Mammary epithelial cell (primary cell): ENCODE measurements at regions of chr2 and their contacts with region 1.

Region 1: DNA sequence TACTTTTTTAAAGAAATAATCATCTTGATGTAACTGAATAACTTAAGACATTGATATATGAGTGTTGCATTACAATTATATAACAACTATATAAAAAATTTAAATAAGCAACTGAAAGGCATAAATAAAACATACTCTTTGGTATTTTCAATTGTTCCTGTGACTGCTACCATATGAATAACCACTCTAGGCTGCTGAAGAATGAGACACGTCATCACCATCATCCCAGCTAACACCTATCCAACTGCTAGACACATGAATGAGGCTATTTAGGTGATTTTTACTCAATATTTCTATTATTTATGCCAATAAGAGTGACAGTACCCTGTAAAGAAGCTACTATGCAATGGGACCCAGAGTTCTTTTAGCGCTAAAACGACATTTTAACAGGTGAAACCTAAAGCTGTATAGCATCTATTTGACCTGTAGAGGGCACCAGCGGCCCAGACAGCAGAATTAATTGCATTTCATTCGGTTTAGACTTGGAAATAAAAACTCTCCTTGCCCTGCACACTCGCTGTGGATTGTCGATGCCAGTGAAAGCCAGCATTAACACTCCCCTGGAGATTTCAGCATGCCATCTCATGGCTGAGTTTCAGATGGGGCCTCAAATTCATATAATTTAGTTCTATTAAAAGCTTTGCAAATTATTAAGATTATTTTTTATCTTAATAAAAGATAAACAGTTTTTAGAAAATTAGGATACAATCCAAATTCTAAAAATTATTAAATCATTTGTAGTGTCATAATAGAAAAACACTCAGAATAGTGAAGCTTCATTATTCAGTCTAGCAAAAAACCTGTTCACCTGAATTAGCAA is 89.4 kb upstream of the MAP2 start:
- DNase-seq: peak; percentile 41
- H3K4me3 ChIP-seq: no peak overlapping the region
- H3K27ac ChIP-seq: no peak overlapping the region
- H3K4me1 ChIP-seq: peaks cover 4% of the 10 kb centered on the region
- H3K27me3 ChIP-seq: no peaks in the 10 kb centered on the region
- CTCF ChIP-seq: peak; percentile 87 to 96

Region 2: DNA sequence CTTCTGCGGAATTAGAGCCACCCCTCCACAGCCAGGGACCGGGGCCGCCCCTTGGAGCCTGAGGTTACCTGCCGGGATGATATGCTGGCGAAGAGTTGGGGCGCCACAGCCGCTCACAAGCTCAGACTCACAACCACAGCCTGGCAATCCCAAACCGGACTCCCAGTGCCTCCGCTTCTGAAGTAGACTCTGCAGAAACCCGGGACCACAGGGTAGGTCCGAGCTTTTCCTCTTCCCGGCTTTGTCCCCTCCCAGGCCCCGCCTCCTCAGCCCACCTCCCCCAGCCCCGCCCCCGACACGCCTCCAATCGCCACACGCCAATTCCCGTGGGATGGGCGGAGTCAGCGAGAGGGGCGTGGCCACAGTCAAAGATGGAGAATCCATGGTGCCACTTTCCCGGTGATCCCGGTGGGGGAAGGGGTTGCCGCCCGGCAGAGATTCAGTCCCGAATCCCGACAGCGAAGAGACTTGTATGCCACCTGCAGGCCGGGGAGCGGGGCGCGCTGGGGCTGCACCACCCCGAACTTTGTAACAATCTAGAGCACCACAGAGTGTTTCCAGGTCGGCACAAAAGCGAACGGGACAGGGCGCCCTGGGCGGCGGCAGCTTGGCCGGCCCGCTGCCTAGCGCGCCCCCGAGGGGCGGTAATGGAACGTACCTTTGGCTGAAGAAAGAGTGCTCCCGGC is 1079.4 kb before region 1 on chr2 and contains the start of gene IDH1:
- CTCF ChIA-PET with region 1: interaction called, 3 read pairs
- dilution Hi-C with region 1: no loop called
- in situ Hi-C with region 1: no loop called
- intact Hi-C with region 1: loop called (anchors 10 kb)
- DNase-seq: peak; percentile 95
- H3K4me3 ChIP-seq: peak within 1 kb of the TSS; percentile 73 to 97 (median 83)
- H3K27ac ChIP-seq: peak within 1 kb of the TSS; percentile 32
- H3K4me1 ChIP-seq: peaks cover 30% of the 10 kb centered on the region
- H3K27me3 ChIP-seq: no peaks in the 10 kb centered on the region
- CTCF ChIP-seq: peak; percentile 48 to 60
- total RNA-seq, gene IDH1: 113 to 125 TPM

Region 3: GRCh38 chr2:208466151-208466919 is 868.1 kb before region 1 on chr2:
- CTCF ChIA-PET with region 1: no interaction called
- dilution Hi-C with region 1: no loop called
- in situ Hi-C with region 1: no loop called
- intact Hi-C with region 1: loop called (anchors 1 kb)
- DNase-seq: peak; percentile 38
- H3K4me3 ChIP-seq: no peak overlapping the region
- H3K27ac ChIP-seq: no peak overlapping the region
- H3K4me1 ChIP-seq: no peaks in the 10 kb centered on the region
- H3K27me3 ChIP-seq: peaks cover 2% of the 10 kb centered on the region
- CTCF ChIP-seq: peak; percentile 68 to 84

Region 4: GRCh38 chr2:209556354-209556961 is 222.1 kb after region 1 on chr2:
- CTCF ChIA-PET with region 1: no interaction called
- dilution Hi-C with region 1: no loop called
- in situ Hi-C with region 1: loop called (anchors 10 to 25 kb)
- intact Hi-C with region 1: loop called (anchors 1 kb)
- DNase-seq: peak; percentile 40
- H3K4me3 ChIP-seq: no peak overlapping the region
- H3K27ac ChIP-seq: no peak overlapping the region
- H3K4me1 ChIP-seq: no peaks in the 10 kb centered on the region
- H3K27me3 ChIP-seq: no peaks in the 10 kb centered on the region
- CTCF ChIP-seq: peak; percentile 42 to 74

Region 5: GRCh38 chr2:209933499-209934483 is 599.4 kb after region 1 on chr2:
- CTCF ChIA-PET with region 1: no interaction called
- dilution Hi-C with region 1: no loop called
- in situ Hi-C with region 1: loop called in 1 of 2 experiments (anchors 25 kb)
- intact Hi-C with region 1: no loop called
- DNase-seq: peak; percentile 60
- H3K4me3 ChIP-seq: peak overlapping the region in 2 of 3 experiments; percentile 4 to 12
- H3K27ac ChIP-seq: no peak overlapping the region
- H3K4me1 ChIP-seq: no peaks in the 10 kb centered on the region
- H3K27me3 ChIP-seq: peaks cover 2% of the 10 kb centered on the region
- CTCF ChIP-seq: peak in 1 of 2 donors; percentile 8

Region 6: GRCh38 chr2:210195101-210195852 is 860.9 kb after region 1 on chr2:
- CTCF ChIA-PET with region 1: no interaction called
- dilution Hi-C with region 1: no loop called
- in situ Hi-C with region 1: no loop called
- intact Hi-C with region 1: loop called (anchors 10 kb)
- DNase-seq: no peak
- H3K4me3 ChIP-seq: no peak overlapping the region
- H3K27ac ChIP-seq: no peak overlapping the region
- H3K4me1 ChIP-seq: no peaks in the 10 kb centered on the region
- H3K27me3 ChIP-seq: no peaks in the 10 kb centered on the region
- CTCF ChIP-seq: peak; percentile 66 to 71